SK-N-SH (cell line): ENCODE measurements at regions of chr2 and their contacts with region 1.

Region 1: DNA sequence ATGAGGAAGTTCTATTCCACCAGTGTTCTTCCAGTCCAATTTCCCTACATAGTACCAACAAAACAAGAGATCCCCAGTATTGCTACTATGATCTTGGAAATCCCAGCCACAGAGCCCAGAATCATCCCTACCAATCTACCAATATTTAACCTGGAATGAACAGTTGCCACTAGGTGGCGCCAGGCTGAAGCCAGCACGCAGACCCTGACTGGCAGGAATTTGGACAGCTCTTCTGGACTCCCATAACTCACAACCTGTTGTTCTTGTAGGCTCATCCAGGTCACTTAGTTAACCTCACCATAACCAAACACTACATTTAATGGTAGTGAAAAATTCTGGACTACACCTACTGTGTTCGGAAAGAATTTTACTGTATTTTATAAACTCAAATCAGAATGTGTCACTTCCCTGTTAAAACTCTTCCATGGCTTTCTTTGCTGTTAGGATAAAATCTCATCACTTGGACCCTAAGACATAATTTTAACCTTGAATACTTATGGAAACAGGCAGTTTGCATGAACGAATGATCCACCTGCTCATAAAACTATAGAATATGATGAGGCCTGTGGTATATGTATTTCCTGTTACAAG is 59.8 kb upstream of the SLC38A11 start:
- DNase-seq: peak; percentile 70
- H3K4me3 ChIP-seq: peak overlapping the region in 1 of 2 experiments; percentile 23; a peak in 1 of 4 replicates
- H3K27ac ChIP-seq: no peak overlapping the region
- H3K4me1 ChIP-seq: peaks cover 0 to 5% of the 10 kb centered on the region in 2 experiments; a peak in 2 of 4 replicates
- H3K27me3 ChIP-seq: no peaks in the 10 kb centered on the region
- CTCF ChIP-seq: peak; percentile 97
- EP300 ChIP-seq: no peak
- RAD21 ChIP-seq: peak; percentile 84

Region 2: DNA sequence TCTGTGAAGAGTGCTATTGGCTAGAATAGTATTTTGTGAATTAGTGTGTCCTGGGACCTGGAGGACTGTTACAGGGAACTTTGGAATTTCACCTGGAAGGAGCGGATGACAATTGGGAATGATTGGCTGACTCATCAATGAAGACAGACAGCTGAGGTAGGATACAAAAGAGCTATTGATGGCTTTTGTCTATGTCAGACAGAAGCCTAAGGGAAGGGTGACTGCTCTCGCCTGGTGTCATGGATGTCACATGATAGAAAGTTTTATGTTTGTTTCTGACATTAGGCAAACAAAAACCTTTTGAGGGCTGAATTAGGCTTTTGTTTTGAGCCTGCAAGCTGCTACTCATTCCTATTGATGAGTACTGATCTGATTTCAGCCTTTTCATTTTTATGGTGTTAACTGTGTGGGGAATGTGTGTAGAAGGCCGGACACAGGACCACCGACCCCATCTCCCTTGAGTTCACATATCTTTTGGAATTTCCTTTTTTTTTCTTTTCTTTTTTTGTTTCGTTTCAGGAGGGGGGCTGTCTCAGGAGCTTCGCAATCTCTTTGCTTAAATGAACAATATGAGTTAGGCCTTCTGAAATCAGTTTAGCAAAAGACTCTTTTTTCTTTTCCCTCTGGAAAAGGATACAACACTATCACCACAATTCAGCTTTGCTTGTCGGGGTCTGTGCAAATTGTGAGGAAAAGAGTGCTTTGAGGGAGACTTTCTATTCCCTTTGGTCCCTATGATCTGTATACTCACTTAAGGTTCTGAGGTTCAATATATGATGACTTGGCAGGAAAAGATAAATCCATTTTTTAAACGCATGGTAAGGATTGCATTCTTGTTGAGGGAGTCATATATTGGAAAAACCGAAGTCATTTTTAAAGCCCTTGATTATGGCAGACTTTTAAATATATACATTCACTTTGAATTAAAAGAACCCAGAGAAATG is 1071.5 kb before region 1 on chr2:
- CTCF ChIA-PET with region 1: no interaction called
- POLR2A ChIA-PET with region 1: no interaction called
- DNase-seq: no peak
- H3K4me3 ChIP-seq: no peak overlapping the region
- H3K27ac ChIP-seq: no peak overlapping the region
- H3K4me1 ChIP-seq: no peaks in the 10 kb centered on the region
- H3K27me3 ChIP-seq: no peaks in the 10 kb centered on the region
- CTCF ChIP-seq: no peak
- EP300 ChIP-seq: no peak
- RAD21 ChIP-seq: no peak

Region 3: GRCh38 chr2:164934401-164935117 is 80.6 kb before region 1 on chr2:
- CTCF ChIA-PET with region 1: no interaction called
- POLR2A ChIA-PET with region 1: no interaction called
- DNase-seq: no peak
- H3K4me3 ChIP-seq: no peak overlapping the region
- H3K27ac ChIP-seq: no peak overlapping the region
- H3K4me1 ChIP-seq: no peaks in the 10 kb centered on the region
- H3K27me3 ChIP-seq: no peaks in the 10 kb centered on the region
- CTCF ChIP-seq: no peak
- EP300 ChIP-seq: no peak
- RAD21 ChIP-seq: no peak

Region 4: DNA sequence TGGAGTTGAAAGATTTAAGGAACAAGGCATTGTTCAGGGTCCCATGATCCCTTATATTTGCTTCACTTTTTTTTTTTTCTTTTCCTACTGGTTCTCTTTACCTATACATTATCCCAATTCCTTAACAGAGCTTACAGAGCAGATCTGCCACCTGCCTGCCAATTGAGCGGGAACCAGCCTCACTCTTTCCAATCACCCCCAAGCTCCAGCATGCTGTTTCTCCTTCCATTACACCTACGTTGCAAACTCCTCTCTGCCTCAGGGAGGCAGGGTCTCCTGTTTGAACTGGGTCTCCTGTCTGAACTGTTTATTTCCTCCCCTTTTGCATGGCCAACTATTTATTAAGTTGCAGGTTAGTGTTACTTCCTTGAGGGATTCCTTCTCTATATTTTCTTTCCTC is 17.4 kb after region 1 on chr2:
- CTCF ChIA-PET with region 1: interaction called, 20 read pairs
- POLR2A ChIA-PET with region 1: no interaction called
- DNase-seq: no peak
- H3K4me3 ChIP-seq: no peak overlapping the region
- H3K27ac ChIP-seq: no peak overlapping the region
- H3K4me1 ChIP-seq: no peaks in the 10 kb centered on the region
- H3K27me3 ChIP-seq: no peaks in the 10 kb centered on the region
- CTCF ChIP-seq: no peak
- EP300 ChIP-seq: no peak
- RAD21 ChIP-seq: no peak

Region 5: GRCh38 chr2:165120740-165121467 is 105.8 kb after region 1 on chr2:
- CTCF ChIA-PET with region 1: interaction called, 10 read pairs
- POLR2A ChIA-PET with region 1: no interaction called
- DNase-seq: no peak
- H3K4me3 ChIP-seq: no peak overlapping the region
- H3K27ac ChIP-seq: no peak overlapping the region
- H3K4me1 ChIP-seq: no peaks in the 10 kb centered on the region; a peak in 1 of 4 replicates
- H3K27me3 ChIP-seq: no peaks in the 10 kb centered on the region
- CTCF ChIP-seq: no peak
- EP300 ChIP-seq: no peak
- RAD21 ChIP-seq: no peak

Region 6: DNA sequence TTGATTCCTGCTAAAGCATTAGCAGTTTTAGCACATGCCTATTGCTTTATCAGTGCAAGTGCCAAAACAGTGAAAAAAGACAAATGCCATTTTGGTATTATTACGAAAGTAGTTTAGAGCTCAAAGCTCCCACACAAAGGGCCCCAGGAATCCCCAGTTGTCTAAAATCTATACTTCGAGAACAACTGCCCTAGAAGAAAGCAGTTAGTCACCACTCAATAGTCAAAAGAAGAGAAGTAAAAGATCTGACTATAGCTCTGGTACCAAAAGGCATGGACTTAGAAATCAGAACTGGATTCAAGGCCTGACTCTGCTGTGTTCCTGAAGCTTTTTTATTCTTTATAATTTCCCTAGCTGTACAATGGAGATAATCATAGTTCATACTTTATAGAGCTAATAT is 166.9 kb after region 1 on chr2:
- CTCF ChIA-PET with region 1: interaction called, 14 read pairs
- POLR2A ChIA-PET with region 1: no interaction called
- DNase-seq: no peak
- H3K4me3 ChIP-seq: no peak overlapping the region
- H3K27ac ChIP-seq: no peak overlapping the region
- H3K4me1 ChIP-seq: peaks cover 0 to 10% of the 10 kb centered on the region in 2 experiments; a peak in 2 of 4 replicates
- H3K27me3 ChIP-seq: no peaks in the 10 kb centered on the region
- CTCF ChIP-seq: no peak
- EP300 ChIP-seq: no peak
- RAD21 ChIP-seq: no peak

Region 7: DNA sequence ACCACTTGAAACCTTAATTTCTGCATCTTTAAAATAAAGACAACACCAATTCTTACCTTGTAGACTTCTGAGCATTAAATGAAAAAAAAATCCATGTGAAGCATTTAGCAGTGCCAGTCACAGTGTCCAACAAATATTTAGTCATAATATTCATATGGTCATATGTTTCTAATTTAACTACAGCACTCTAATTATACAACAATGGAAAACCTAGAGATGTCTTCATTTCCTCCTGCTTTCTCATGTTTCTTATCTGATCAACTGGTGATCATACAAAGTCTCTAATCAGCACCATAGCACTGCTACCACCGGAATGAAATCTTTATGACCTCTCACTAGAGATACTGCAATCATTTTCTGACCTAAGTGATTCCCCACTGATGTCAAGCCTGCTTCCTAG is 198.9 kb after region 1 on chr2:
- CTCF ChIA-PET with region 1: interaction called, 300 read pairs
- POLR2A ChIA-PET with region 1: no interaction called
- DNase-seq: peak; percentile 3
- H3K4me3 ChIP-seq: no peak overlapping the region
- H3K27ac ChIP-seq: peak overlapping the region in 1 of 2 experiments; percentile 47; a peak in 2 of 4 replicates
- H3K4me1 ChIP-seq: no peaks in the 10 kb centered on the region; a peak in 1 of 4 replicates
- H3K27me3 ChIP-seq: no peaks in the 10 kb centered on the region
- CTCF ChIP-seq: no peak
- EP300 ChIP-seq: no peak; a peak in 1 of 4 replicates
- RAD21 ChIP-seq: no peak

Region 8: DNA sequence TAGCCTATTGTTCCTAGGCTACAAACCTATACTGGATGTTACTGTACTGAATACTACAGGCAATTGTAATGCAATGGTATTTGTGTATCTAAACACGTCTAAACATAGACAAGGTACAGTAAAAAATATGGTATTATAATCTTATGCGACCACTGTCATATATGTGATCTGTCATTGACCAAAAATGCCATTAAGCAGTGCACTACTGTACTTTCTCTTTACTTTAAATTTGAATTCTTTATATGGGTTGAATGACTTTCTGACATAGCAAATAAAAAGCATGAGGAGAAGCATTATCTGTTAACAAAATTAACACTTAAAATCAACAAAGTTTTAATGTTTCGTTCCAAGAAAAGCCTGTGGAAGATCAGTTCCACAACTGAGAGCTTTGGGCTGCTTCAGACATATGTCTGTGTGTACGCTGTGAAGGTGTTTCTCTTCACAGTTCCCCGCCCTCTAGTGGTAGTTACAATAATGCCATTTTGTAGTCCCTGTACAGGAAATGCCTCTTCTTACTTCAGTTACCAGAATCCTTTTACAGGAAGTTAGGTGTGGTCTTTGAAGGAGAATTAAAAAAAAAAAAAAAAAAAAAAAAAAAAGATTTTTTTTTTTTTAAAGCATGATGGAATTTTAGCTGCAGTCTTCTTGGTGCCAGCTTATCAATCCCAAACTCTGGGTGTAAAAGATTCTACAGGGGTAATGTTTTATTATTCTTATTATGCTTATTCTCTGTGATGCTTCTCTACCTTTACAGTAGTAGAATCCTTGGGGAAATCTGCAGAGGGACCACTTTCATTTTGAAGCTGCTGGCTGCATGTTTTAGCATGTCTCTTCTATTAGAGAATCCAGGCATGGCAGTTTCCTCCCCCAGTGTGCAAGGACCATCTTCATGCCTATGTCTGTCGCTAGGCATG is 278.6 kb after region 1 on chr2:
- CTCF ChIA-PET with region 1: interaction called, 16 read pairs
- POLR2A ChIA-PET with region 1: no interaction called
- DNase-seq: peak; percentile 67
- H3K4me3 ChIP-seq: peak overlapping the region; percentile 86 to 90
- H3K27ac ChIP-seq: peak overlapping the region in 1 of 2 experiments; percentile 90; a peak in 2 of 4 replicates
- H3K4me1 ChIP-seq: peaks cover 0 to 11% of the 10 kb centered on the region in 2 experiments; a peak in 2 of 4 replicates
- H3K27me3 ChIP-seq: no peaks in the 10 kb centered on the region
- CTCF ChIP-seq: peak; percentile 76
- EP300 ChIP-seq: no peak
- RAD21 ChIP-seq: peak; percentile 70